OCI-LY7 (cell line): ENCODE measurements at regions of chr20 and their contacts with region 1.

Region 1: GRCh38 chr20:18507218-18508021 is at the start of gene SEC23B:
- DNase-seq: peak; percentile 97
- H3K4me3 ChIP-seq: peak within 1 kb of the TSS; percentile 91
- H3K27ac ChIP-seq: peak within 1 kb of the TSS; percentile 90
- H3K4me1 ChIP-seq: peaks cover 15% of the 10 kb centered on the region
- CTCF ChIP-seq: no peak
- total RNA-seq, gene SEC23B: 40.3 and 42.6 TPM in 2 replicates

Region 2: DNA sequence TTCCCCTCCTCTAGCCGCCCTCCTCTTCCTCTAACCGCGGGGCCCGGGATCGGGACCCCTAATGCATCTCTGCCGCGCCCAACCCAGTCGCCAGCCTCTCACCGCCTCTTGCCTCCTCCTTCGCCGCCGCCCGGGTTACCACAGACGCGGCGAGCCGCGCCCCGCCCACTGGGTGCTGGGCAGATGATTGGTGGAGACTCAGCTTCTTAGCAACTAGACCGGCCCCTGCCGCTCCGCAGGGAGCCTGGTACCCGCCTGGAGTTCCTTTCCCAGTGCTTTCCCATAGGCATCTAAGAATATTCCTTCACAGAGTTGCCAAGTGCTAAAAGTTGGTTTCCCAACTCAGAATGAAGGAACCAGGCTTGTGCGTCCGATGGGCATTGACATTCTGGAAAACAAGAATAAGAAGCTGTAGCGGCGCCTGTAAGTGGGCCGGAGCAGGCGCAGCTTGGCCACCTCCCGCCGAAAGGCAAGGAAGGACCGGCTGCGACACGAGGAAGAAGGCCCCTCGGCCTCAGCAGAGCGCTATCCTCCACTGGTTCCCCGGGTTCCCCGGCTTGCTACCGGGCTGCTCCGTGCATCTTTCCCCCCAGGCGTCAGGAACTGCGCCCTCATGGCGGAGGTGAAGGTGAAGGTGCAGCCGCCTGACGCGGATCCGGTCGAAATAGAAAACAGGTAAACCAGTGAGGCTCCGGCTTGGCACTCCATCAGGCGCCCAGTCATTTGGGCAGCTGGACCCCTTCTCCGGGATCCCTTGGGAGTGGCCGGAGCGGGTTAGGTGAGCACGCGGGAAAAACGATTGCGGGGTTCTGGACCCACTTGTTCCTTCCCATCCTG is 40.3 kb before region 1 on chr20 and contains the starts of genes DZANK1 and POLR3F:
- CTCF ChIA-PET with region 1: no interaction called
- POLR2A ChIA-PET with region 1: interaction called, 15 read pairs
- intact Hi-C with region 1: loop called (anchors 1 kb)
- DNase-seq: peak; percentile 93
- H3K4me3 ChIP-seq: peak within 1 kb of the TSS; percentile 86
- H3K27ac ChIP-seq: peak within 1 kb of the TSS; percentile 3
- H3K4me1 ChIP-seq: peaks cover 17% of the 10 kb centered on the region
- CTCF ChIP-seq: no peak
- total RNA-seq, gene DZANK1: 7.9 and 9.1 TPM in 2 replicates
- total RNA-seq, gene POLR3F: 12.0 and 14.9 TPM in 2 replicates

Region 3: GRCh38 chr20:18496740-18497592 is 10.5 kb before region 1 on chr20 and contains the start of gene RBBP9:
- CTCF ChIA-PET with region 1: interaction called, 3 read pairs
- POLR2A ChIA-PET with region 1: interaction called, 101 read pairs
- intact Hi-C with region 1: no loop called
- DNase-seq: peak; percentile 84
- H3K4me3 ChIP-seq: peak within 1 kb of the TSS; percentile 95
- H3K27ac ChIP-seq: peak within 1 kb of the TSS; percentile 25
- H3K4me1 ChIP-seq: peaks cover 14% of the 10 kb centered on the region
- CTCF ChIP-seq: no peak
- total RNA-seq, gene RBBP9: 8.1 and 8.7 TPM in 2 replicates

Region 4: GRCh38 chr20:18566892-18567742 is 59.7 kb after region 1 on chr20 and contains the start of gene SMIM26:
- CTCF ChIA-PET with region 1: no interaction called
- POLR2A ChIA-PET with region 1: interaction called, 18 read pairs
- intact Hi-C with region 1: loop called (anchors 5 kb)
- DNase-seq: peak; percentile 97
- H3K4me3 ChIP-seq: peak within 1 kb of the TSS; percentile 83
- H3K27ac ChIP-seq: peak within 1 kb of the TSS; percentile 51
- H3K4me1 ChIP-seq: peaks cover 16% of the 10 kb centered on the region
- CTCF ChIP-seq: no peak
- total RNA-seq, gene SMIM26: 124 and 161 TPM in 2 replicates

Region 5: DNA sequence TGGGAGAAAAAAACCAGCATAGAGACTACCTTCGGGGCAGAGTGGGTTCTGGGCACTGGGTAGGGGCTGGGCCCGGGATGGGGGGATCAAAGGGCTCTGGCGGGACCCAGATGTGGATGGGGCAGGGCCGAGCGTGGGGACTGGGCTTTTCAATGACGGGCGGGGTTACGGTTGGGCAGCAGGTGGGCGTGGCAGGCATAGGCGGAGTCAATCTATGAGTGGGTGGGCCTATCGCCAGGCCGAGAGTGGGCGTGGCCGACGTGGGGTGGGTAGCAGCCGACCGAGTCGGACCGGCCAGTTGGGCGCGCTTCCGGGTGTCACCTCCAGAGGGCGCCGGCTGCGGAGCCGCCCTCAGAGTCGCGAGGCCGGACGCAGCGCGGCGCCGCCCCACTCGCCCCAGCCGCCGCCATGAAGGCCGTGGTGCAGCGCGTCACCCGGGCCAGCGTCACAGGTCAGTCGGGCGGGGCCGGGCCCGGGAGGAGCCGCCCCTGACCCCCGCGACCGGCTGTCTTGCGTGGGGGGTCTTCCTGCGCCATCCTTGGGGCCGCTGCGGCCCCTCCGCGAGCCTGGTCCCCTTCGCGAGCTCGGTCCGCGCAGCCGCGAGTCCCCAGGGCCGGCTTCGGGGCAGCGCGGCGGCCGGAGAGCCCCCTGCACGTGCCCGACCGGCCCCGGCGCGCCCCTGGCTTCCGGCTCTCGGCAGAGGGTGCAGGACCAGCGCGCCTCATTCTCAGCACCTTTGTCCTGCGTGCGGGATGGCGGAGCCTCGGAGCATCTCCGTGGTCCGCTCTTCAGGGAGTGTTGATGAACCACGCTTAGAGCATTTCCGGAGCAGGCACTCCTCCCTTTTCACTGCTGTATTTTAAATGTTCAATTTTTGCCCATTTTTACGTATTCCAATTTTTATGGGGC is 80.5 kb after region 1 on chr20 and contains the start of gene DTD1:
- CTCF ChIA-PET with region 1: interaction called, 3 read pairs
- POLR2A ChIA-PET with region 1: interaction called, 11 read pairs
- intact Hi-C with region 1: no loop called
- DNase-seq: peak; percentile 87
- H3K4me3 ChIP-seq: peak within 1 kb of the TSS; percentile 81
- H3K27ac ChIP-seq: peak within 1 kb of the TSS; percentile 10
- H3K4me1 ChIP-seq: peaks cover 15% of the 10 kb centered on the region
- CTCF ChIP-seq: peak; percentile 76
- total RNA-seq, gene DTD1: 27.6 and 35.3 TPM in 2 replicates